ENCODE measurements at regions of chr16 and their contacts with region 1.

Region 1: GRCh38 chr16:22297114-22297878 is at the start of gene POLR3E:
- DNase-seq: peak; percentile 99 to 100 (median 99)
- ATAC-seq: peak; percentile 94 to 96 (median 96)
- H3K4me3 ChIP-seq: peak within 1 kb of the TSS; percentile 67 to 97 (median 82)
- H3K27ac ChIP-seq: peak within 1 kb of the TSS; percentile 81 to 94 (median 90)
- H3K4me1 ChIP-seq: peaks cover 0 to 33% (median 14%) of the 10 kb centered on the region in 12 donors
- H3K27me3 ChIP-seq: no peaks in the 10 kb centered on the region
- CTCF ChIP-seq: peak; percentile 91 to 99 (median 95)
- POLR2A ChIP-seq: peak in 1 of 2 donors; percentile 61
- total RNA-seq, gene POLR3E: 27.7 to 72.6 (median 31.3) TPM

Region 2: GRCh38 chr16:22001591-22001990 is 295.7 kb before region 1 on chr16:
- intact Hi-C with region 1: loop called in 7 of 10 experiments (anchors 5 to 10 kb)
- DNase-seq: no peak
- ATAC-seq: peak in 1 of 4 donors; percentile 57
- H3K4me3 ChIP-seq: no peak overlapping the region
- H3K27ac ChIP-seq: no peak overlapping the region
- H3K4me1 ChIP-seq: peaks cover 0 to 32% (median 10%) of the 10 kb centered on the region in 12 donors
- H3K27me3 ChIP-seq: no peaks in the 10 kb centered on the region
- CTCF ChIP-seq: no peak
- POLR2A ChIP-seq: no peak

Region 3: GRCh38 chr16:22077700-22078313 is 219.5 kb before region 1 on chr16:
- intact Hi-C with region 1: loop called in 1 of 10 experiments (anchors 10 kb)
- DNase-seq: peak in 4 of 5 donors; percentile 38 to 55 (median 51)
- ATAC-seq: peak in 3 of 4 donors; percentile 44 to 55 (median 54)
- H3K4me3 ChIP-seq: no peak overlapping the region
- H3K27ac ChIP-seq: no peak overlapping the region
- H3K4me1 ChIP-seq: peaks cover 0 to 17% (median 0%) of the 10 kb centered on the region in 12 donors
- H3K27me3 ChIP-seq: no peaks in the 10 kb centered on the region
- CTCF ChIP-seq: peak; percentile 72 to 89 (median 82)
- POLR2A ChIP-seq: no peak

Region 4: GRCh38 chr16:22143343-22143742 is 154.0 kb before region 1 on chr16:
- intact Hi-C with region 1: no loop called
- DNase-seq: no peak
- ATAC-seq: no peak
- H3K4me3 ChIP-seq: no peak overlapping the region
- H3K27ac ChIP-seq: no peak overlapping the region
- H3K4me1 ChIP-seq: no peaks in the 10 kb centered on the region
- H3K27me3 ChIP-seq: no peaks in the 10 kb centered on the region
- CTCF ChIP-seq: no peak
- POLR2A ChIP-seq: no peak

Region 5: DNA sequence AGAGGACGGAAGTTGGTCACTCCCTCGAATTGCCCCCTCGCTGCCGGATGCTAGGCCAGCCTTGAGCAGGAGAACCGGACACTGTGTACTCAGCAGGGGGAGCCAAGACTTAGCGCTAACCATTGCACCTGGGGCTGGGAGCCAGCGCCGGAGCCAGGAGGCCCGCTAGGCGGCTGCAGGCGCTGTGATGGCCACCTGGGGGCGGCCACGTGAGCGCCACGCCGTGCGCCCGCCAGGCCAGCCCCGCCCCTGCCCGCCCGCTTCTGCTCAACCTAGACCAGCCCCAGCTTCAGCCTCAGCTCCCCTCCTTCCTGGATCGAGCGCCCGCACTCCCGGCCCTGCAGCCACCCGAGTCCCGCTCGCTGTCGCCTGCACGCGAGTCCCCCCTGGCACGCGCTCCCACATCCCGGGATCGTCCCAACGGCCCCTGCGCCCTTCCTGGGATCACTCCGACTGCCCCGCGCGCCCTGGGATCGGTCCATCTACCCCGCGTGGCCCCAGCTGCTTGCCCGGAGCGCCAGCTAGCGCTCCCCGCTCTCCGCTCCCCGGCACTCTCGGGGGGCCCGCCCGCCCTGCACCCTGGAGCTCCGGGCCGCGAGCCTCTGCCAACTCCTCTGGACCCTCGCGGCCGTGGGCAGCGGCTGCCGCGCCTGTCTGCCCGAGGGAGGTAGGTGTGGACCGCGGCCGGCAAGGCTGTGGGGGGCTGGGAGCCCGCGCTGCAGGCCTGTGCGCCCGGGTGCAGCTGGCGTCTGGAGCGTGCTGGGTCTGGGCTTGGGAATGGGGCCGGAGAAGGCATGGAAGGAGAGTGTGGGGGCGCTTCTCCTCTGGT is 91.1 kb before region 1 on chr16 and contains the start of gene EEF2K:
- intact Hi-C with region 1: loop called in 7 of 10 experiments (anchors 1 to 5 kb)
- DNase-seq: peak; percentile 89 to 95 (median 93)
- ATAC-seq: peak; percentile 87 to 94 (median 92)
- H3K4me3 ChIP-seq: peak within 1 kb of the TSS; percentile 77 to 98 (median 88)
- H3K27ac ChIP-seq: peak within 1 kb of the TSS; percentile 89 to 97 (median 92)
- H3K4me1 ChIP-seq: peaks cover 0 to 44% (median 17%) of the 10 kb centered on the region in 12 donors
- H3K27me3 ChIP-seq: no peaks in the 10 kb centered on the region
- CTCF ChIP-seq: peak; percentile 71 to 95 (median 85)
- POLR2A ChIP-seq: peak in 1 of 2 donors; percentile 53
- total RNA-seq, gene EEF2K: 16.4 to 33.6 (median 24.6) TPM

Measured in heart left ventricle (tissue), 16 donors.